IMR-90 (cell line): ENCODE measurements at regions of chr11 and their contacts with region 1.

Region 1: DNA sequence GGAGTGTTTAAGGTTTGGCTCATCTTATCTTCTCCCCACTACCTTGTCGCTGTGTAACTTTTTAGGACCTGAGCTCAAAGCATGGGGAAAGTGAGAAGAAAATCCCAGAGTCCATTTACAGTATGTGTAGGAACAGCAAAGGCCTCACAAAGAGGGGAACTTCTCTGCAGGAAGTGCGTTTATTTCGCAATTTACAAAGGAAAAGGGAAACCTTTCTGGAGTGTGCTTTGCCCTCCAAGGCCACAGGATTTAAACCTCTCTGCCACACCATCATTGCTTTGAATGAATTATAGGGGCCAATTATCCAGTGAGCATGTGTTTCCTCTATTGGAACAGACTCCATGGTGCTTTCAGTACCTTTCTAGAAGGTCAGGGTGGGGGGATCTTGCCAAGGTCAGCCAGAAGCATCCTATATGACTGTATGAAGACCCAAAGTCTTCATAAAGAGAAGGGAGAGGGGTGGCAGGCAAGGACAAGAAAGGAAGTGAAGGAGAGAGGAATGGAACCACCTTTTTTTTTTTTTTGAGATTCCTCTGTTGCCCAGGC is 68.1 kb upstream of the LMO2 start:
- DNase-seq: no peak
- ATAC-seq: no peak
- H3K4me3 ChIP-seq: no peak overlapping the region
- H3K27ac ChIP-seq: no peak overlapping the region
- H3K4me1 ChIP-seq: no peaks in the 10 kb centered on the region
- H3K27me3 ChIP-seq: peaks cover 33% of the 10 kb centered on the region
- CTCF ChIP-seq: no peak
- POLR2A ChIP-seq: no peak
- RAD21 ChIP-seq: no peak

Region 2: GRCh38 chr11:33869481-33870422 is 90.2 kb before region 1 on chr11:
- CTCF ChIA-PET with region 1: no interaction called
- POLR2A ChIA-PET with region 1: no interaction called
- dilution Hi-C with region 1: no loop called
- in situ Hi-C with region 1: loop called (anchors 5 kb)
- intact Hi-C with region 1: loop called (anchors 5 kb)
- DNase-seq: peak; percentile 2
- ATAC-seq: peak; percentile 72
- H3K4me3 ChIP-seq: peak overlapping the region; percentile 44
- H3K27ac ChIP-seq: no peak overlapping the region
- H3K4me1 ChIP-seq: no peaks in the 10 kb centered on the region
- H3K27me3 ChIP-seq: peaks cover 71% of the 10 kb centered on the region
- CTCF ChIP-seq: no peak
- POLR2A ChIP-seq: no peak
- RAD21 ChIP-seq: no peak